Lower leg skin (tissue), 4 donors: ENCODE measurements at regions of chr5 and their contacts with region 1.

Region 1: DNA sequence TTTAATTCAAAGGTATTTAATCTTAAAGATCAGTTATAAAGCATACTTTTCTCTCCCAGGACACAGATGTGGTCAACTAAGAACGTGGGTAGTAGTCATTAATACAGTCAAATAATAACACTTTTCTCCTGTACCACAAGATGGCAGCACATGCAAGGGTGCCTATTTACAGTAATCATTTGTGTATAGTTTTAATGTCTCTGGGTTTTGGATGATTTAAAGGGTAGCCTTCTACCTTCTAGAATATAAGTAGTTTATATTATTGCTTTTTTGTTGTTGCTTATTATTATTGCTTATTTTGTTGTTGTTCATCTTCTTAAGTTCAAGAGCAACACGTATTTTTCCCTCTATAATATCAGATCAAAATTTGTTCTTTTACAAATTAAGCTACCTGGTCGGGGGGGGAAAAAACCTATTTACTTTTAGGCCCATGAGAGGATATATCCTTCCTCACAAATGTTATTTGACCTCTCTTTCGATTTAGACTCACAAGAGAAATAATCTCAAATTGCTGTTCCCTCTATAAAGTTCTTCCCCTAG is 59.6 kb upstream of the SLC27A6 start:
- DNase-seq: peak in 1 of 2 donors; percentile 25
- H3K4me3 ChIP-seq: no peak overlapping the region
- CTCF ChIP-seq: no peak
- POLR2A ChIP-seq: no peak

Region 2: GRCh38 chr5:128920345-128921215 is 14.9 kb after region 1 on chr5:
- intact Hi-C with region 1: loop called (anchors 2 kb)
- DNase-seq: no peak
- H3K4me3 ChIP-seq: no peak overlapping the region
- CTCF ChIP-seq: no peak
- POLR2A ChIP-seq: no peak

Region 3: DNA sequence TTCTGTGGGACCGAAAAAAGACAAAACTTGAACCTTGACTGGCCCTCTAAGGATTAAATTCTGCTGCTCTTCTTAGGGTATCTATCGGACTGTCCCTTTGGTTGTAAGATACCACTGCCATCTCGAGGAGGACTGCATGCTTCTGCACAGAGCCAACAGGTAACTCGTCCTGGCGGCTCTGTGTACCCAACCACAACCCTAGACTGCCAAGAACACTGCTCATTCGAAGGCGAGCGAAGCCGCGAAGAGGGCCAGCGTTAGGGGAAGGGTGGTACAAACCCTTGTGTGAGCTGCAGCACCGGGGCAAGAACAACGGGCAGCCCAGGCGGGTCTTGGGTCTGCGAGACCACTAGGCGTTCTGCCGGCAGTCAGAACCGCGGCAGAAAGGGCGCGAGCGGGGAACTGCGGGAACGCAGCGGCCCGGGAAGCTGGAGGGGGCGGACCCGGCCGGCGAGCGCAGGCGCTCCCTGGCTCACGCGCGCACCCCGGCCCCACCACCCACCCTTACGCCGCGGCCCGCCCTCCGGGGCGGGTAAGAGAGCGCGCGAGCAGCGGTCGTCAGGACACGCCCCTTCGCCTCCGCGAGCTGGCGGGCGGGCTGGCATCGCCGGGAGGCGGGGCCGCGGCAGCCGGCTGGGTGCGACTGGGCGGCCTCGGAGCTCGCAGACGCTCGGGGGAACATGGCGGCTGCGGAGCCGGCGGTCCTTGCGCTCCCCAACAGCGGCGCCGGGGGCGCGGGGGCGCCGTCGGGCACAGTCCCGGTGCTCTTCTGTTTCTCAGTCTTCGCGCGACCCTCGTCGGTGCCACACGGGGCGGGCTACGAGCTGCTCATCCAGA is 188.7 kb after region 1 on chr5 and contains the start of gene ISOC1:
- intact Hi-C with region 1: no loop called
- DNase-seq: peak; percentile 80 to 97
- H3K4me3 ChIP-seq: peak within 1 kb of the TSS; percentile 80
- CTCF ChIP-seq: no peak
- POLR2A ChIP-seq: no peak
- total RNA-seq, gene ISOC1: 37.7 to 67.2 (median 38.7) TPM